Dendritic cell treated with granulocyte-macrophage colony-stimulating factor and Interleukin-4, amounts not matched to agents 40 ng/mL and 50 ng/mL, for 4 days (primary cell): ENCODE measurements at regions of chr13 and their contacts with region 1.

Region 1: GRCh38 chr13:30355384-30355699 is 48.0 kb upstream of the KATNAL1 start:
- H3K4me3 Mint-ChIP-seq: no peak overlapping the region
- H3K27ac Mint-ChIP-seq: no peak overlapping the region
- H3K4me1 Mint-ChIP-seq: peaks cover 26% of the 10 kb centered on the region
- H3K27me3 Mint-ChIP-seq: no peaks in the 10 kb centered on the region

Region 2: GRCh38 chr13:30551189-30551588 is 195.8 kb after region 1 on chr13:
- intact Hi-C with region 1: loop called (anchors 5 kb)
- H3K4me3 Mint-ChIP-seq: no peak overlapping the region
- H3K27ac Mint-ChIP-seq: no peak overlapping the region
- H3K4me1 Mint-ChIP-seq: no peaks in the 10 kb centered on the region
- H3K27me3 Mint-ChIP-seq: no peaks in the 10 kb centered on the region